IMR-90 (cell line): ENCODE measurements at regions of chr16 and their contacts with region 1.

Region 1: GRCh38 chr16:4402439-4403132 is 13.8 kb downstream of the CORO7 start:
- DNase-seq: peak; percentile 62
- ATAC-seq: peak; percentile 97
- H3K4me3 ChIP-seq: no peak overlapping the region
- H3K27ac ChIP-seq: no peak overlapping the region
- H3K4me1 ChIP-seq: peaks cover 4% of the 10 kb centered on the region
- H3K27me3 ChIP-seq: no peaks in the 10 kb centered on the region
- CTCF ChIP-seq: peak; percentile 80
- POLR2A ChIP-seq: peak; percentile 44; the same call in 1 of the 2 replicates
- RAD21 ChIP-seq: peak; percentile 95

Region 2: GRCh38 chr16:4271176-4272066 is 131.2 kb before region 1 on chr16:
- CTCF ChIA-PET with region 1: interaction called, 8 read pairs
- POLR2A ChIA-PET with region 1: no interaction called
- dilution Hi-C with region 1: no loop called
- in situ Hi-C with region 1: no loop called
- intact Hi-C with region 1: loop called (anchors 5 kb)
- DNase-seq: peak; percentile 91
- ATAC-seq: peak; percentile 87
- H3K4me3 ChIP-seq: peak overlapping the region; percentile 83
- H3K27ac ChIP-seq: peak overlapping the region; percentile 86
- H3K4me1 ChIP-seq: no peaks in the 10 kb centered on the region
- H3K27me3 ChIP-seq: no peaks in the 10 kb centered on the region
- CTCF ChIP-seq: peak; percentile 28; the same call in 1 of the 2 replicates
- POLR2A ChIP-seq: no peak
- RAD21 ChIP-seq: peak; percentile 19; the same call in 1 of the 2 replicates

Region 3: GRCh38 chr16:4288148-4288921 is 114.3 kb before region 1 on chr16:
- CTCF ChIA-PET with region 1: interaction called, 4 read pairs
- POLR2A ChIA-PET with region 1: no interaction called
- dilution Hi-C with region 1: no loop called
- in situ Hi-C with region 1: no loop called
- intact Hi-C with region 1: loop called (anchors 1 kb)
- DNase-seq: peak; percentile 82
- ATAC-seq: peak; percentile 77
- H3K4me3 ChIP-seq: no peak overlapping the region
- H3K27ac ChIP-seq: no peak overlapping the region
- H3K4me1 ChIP-seq: peaks cover 14% of the 10 kb centered on the region
- H3K27me3 ChIP-seq: no peaks in the 10 kb centered on the region
- CTCF ChIP-seq: peak; percentile 73
- POLR2A ChIP-seq: no peak
- RAD21 ChIP-seq: peak; percentile 62

Region 4: GRCh38 chr16:4350787-4351659 is 51.6 kb before region 1 on chr16 and contains the start of gene PAM16:
- CTCF ChIA-PET with region 1: interaction called, 12 read pairs
- POLR2A ChIA-PET with region 1: no interaction called
- dilution Hi-C with region 1: no loop called
- in situ Hi-C with region 1: no loop called
- intact Hi-C with region 1: no loop called
- DNase-seq: peak; percentile 91
- ATAC-seq: peak; percentile 96
- H3K4me3 ChIP-seq: peak within 1 kb of the TSS; percentile 86
- H3K27ac ChIP-seq: peak within 1 kb of the TSS; percentile 82
- H3K4me1 ChIP-seq: peaks cover 5% of the 10 kb centered on the region
- H3K27me3 ChIP-seq: no peaks in the 10 kb centered on the region
- CTCF ChIP-seq: no peak
- POLR2A ChIP-seq: peak; percentile 30; the same call in 1 of the 2 replicates
- RAD21 ChIP-seq: no peak
- total RNA-seq, gene PAM16: 17.9 and 25.6 TPM in 2 replicates

Region 5: GRCh38 chr16:4358831-4359561 is 43.6 kb before region 1 on chr16:
- CTCF ChIA-PET with region 1: interaction called, 7 read pairs
- POLR2A ChIA-PET with region 1: no interaction called
- dilution Hi-C with region 1: no loop called
- in situ Hi-C with region 1: loop called (anchors 5 kb)
- intact Hi-C with region 1: loop called (anchors 1 kb)
- DNase-seq: no peak
- ATAC-seq: peak; percentile 94
- H3K4me3 ChIP-seq: no peak overlapping the region
- H3K27ac ChIP-seq: no peak overlapping the region
- H3K4me1 ChIP-seq: peaks cover 1% of the 10 kb centered on the region; the same call in 1 of the 2 replicates
- H3K27me3 ChIP-seq: no peaks in the 10 kb centered on the region
- CTCF ChIP-seq: peak; percentile 83
- POLR2A ChIP-seq: no peak
- RAD21 ChIP-seq: peak; percentile 88

Region 6: GRCh38 chr16:4733211-4734062 is 330.9 kb after region 1 on chr16:
- CTCF ChIA-PET with region 1: no interaction called
- POLR2A ChIA-PET with region 1: no interaction called
- dilution Hi-C with region 1: no loop called
- in situ Hi-C with region 1: no loop called
- intact Hi-C with region 1: no loop called
- DNase-seq: no peak
- ATAC-seq: peak; percentile 1
- H3K4me3 ChIP-seq: peak overlapping the region; percentile 89
- H3K27ac ChIP-seq: peak overlapping the region; percentile 70
- H3K4me1 ChIP-seq: peaks cover 4% of the 10 kb centered on the region
- H3K27me3 ChIP-seq: no peaks in the 10 kb centered on the region
- CTCF ChIP-seq: no peak
- POLR2A ChIP-seq: no peak
- RAD21 ChIP-seq: no peak